ENCODE measurements at regions of chr7 and their contacts with region 1.

Region 1: GRCh38 chr7:518630-519483 is 789 bp downstream of the PDGFA start:
- DNase-seq: peak; percentile 64 to 92 (median 82)
- H3K4me3 ChIP-seq: peak overlapping the region; percentile 75 to 95 (median 88)
- H3K27ac ChIP-seq: peak overlapping the region; percentile 82 to 99 (median 98)
- H3K27me3 ChIP-seq: peaks cover 0 to 21% (median 0%) of the 10 kb centered on the region in 45 donors
- CTCF ChIP-seq: peak in 15 of 56 donors; percentile 8 to 37 (median 19)

Region 2: GRCh38 chr7:332646-333392 is 186.0 kb before region 1 on chr7:
- intact Hi-C with region 1: loop called in 1 of 2 experiments (anchors 2 kb)
- DNase-seq: peak; percentile 72 to 85 (median 76)
- H3K4me3 ChIP-seq: peak overlapping the region; percentile 25 to 74 (median 59)
- H3K27ac ChIP-seq: peak overlapping the region in 56 of 59 donors; percentile 47 to 94 (median 80)
- H3K27me3 ChIP-seq: no peaks in the 10 kb centered on the region
- CTCF ChIP-seq: peak; percentile 68 to 97 (median 91)

Region 3: DNA sequence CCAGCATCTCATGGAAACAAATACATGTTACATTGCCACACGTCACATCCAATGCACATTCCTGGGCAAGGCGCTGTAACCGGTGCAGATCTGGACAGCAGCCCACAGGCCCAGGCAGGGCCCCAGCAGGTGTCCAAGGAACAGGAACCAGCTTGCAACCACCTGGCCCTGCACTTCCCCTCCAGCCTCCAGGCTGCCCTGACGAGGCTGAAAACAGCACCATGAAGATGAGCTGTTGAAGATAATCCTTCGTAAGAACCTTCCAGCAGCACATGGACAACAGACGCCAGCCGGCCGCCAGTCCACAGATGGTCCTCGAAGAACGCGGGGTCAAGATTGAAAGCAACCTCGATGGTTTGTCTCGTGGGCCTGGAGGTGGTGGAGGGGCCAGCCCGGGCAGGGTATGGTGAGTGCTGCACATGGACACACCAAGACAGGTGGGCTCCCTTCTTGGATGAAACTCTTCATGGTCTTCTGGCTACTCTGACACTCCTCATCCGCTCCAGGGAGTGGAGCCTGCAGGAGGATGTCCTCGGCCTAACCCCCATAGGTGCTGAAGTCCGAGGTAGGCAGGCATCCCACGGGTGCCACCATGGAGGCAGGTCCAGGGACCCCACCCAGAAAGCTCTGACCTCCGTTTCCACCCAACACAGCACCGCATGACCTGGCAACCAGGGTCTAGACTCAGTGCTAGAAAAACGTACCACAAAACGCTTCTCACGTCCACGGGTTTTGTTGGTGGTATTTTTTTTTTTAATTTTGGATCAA is 22.1 kb before region 1 on chr7:
- intact Hi-C with region 1: loop called in 1 of 2 experiments (anchors 2 kb)
- DNase-seq: peak in 1 of 10 donors; percentile 38
- H3K4me3 ChIP-seq: no peak overlapping the region
- H3K27ac ChIP-seq: peak overlapping the region in 58 of 59 donors; percentile 4 to 99 (median 95)
- H3K27me3 ChIP-seq: no peaks in the 10 kb centered on the region
- CTCF ChIP-seq: no peak

Region 4: DNA sequence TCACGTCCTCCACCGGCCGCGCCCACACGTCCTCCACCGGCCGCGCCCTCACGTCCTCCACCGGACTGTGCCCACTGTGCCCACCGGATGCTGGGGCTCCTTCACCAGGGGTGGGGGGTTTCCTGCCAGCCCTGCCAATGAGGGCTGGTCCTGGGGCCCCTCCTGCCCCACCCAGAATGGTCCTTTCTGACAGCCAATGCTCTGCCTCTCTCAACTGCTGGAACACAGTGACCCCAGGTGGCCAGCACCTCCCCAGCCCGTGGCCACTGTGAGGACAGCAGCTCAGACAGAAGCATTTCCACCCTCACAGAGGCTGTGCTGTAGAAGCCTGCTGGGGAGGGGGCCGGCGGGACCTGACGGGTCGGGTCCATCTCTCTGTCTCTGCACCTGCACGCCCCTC is 117.5 kb after region 1 on chr7:
- intact Hi-C with region 1: loop called in 1 of 2 experiments (anchors 10 kb)
- DNase-seq: peak in 6 of 10 donors; percentile 49 to 70 (median 55)
- H3K4me3 ChIP-seq: peak overlapping the region in 1 of 59 donors; percentile 16
- H3K27ac ChIP-seq: no peak overlapping the region
- H3K27me3 ChIP-seq: no peaks in the 10 kb centered on the region
- CTCF ChIP-seq: peak in 54 of 56 donors; percentile 17 to 71 (median 56)

Region 5: GRCh38 chr7:768881-769504 is 250.1 kb after region 1 on chr7:
- intact Hi-C with region 1: loop called (anchors 5 to 10 kb)
- DNase-seq: peak in 6 of 10 donors; percentile 28 to 82 (median 51)
- H3K4me3 ChIP-seq: peak overlapping the region in 49 of 59 donors; percentile 7 to 52 (median 34)
- H3K27ac ChIP-seq: peak overlapping the region in 42 of 59 donors; percentile 4 to 83 (median 58)
- H3K27me3 ChIP-seq: no peaks in the 10 kb centered on the region
- CTCF ChIP-seq: no peak

Region 6: GRCh38 chr7:876167-876967 is 357.5 kb after region 1 on chr7 and contains the start of gene GET4:
- intact Hi-C with region 1: loop called in 1 of 2 experiments (anchors 10 kb)
- DNase-seq: peak; percentile 97 to 100 (median 98)
- H3K4me3 ChIP-seq: peak within 1 kb of the TSS; percentile 50 to 92 (median 80)
- H3K27ac ChIP-seq: peak within 1 kb of the TSS; percentile 74 to 97 (median 93)
- H3K27me3 ChIP-seq: no peaks in the 10 kb centered on the region
- CTCF ChIP-seq: peak in 47 of 56 donors; percentile 0 to 65 (median 47)
- total RNA-seq, gene GET4: 25.4 to 54.1 (median 40.7) TPM

Measured in dorsolateral prefrontal cortex (tissue), 120 donors.